Mammary epithelial cell (primary cell): ENCODE measurements at regions of chr11 and their contacts with region 1.

Region 1: GRCh38 chr11:69296890-69297786 is 3.2 kb downstream of the MYEOV start:
- DNase-seq: peak; percentile 99
- H3K4me3 ChIP-seq: no peak overlapping the region
- H3K27ac ChIP-seq: peak overlapping the region; percentile 92
- H3K4me1 ChIP-seq: peaks cover 66% of the 10 kb centered on the region
- H3K27me3 ChIP-seq: no peaks in the 10 kb centered on the region
- CTCF ChIP-seq: no peak

Region 2: GRCh38 chr11:69257838-69258658 is 39.1 kb before region 1 on chr11:
- CTCF ChIA-PET with region 1: no interaction called
- dilution Hi-C with region 1: loop called (anchors 5 kb)
- in situ Hi-C with region 1: no loop called
- intact Hi-C with region 1: no loop called
- DNase-seq: no peak
- H3K4me3 ChIP-seq: no peak overlapping the region
- H3K27ac ChIP-seq: no peak overlapping the region
- H3K4me1 ChIP-seq: peaks cover 3% of the 10 kb centered on the region
- H3K27me3 ChIP-seq: no peaks in the 10 kb centered on the region
- CTCF ChIP-seq: no peak

Region 3: GRCh38 chr11:69352715-69353325 is 55.7 kb after region 1 on chr11:
- CTCF ChIA-PET with region 1: interaction called, 3 read pairs
- dilution Hi-C with region 1: no loop called
- in situ Hi-C with region 1: no loop called
- intact Hi-C with region 1: loop called (anchors 1 kb)
- DNase-seq: peak; percentile 93
- H3K4me3 ChIP-seq: no peak overlapping the region
- H3K27ac ChIP-seq: peak overlapping the region; percentile 26
- H3K4me1 ChIP-seq: peaks cover 35% of the 10 kb centered on the region
- H3K27me3 ChIP-seq: no peaks in the 10 kb centered on the region
- CTCF ChIP-seq: no peak

Region 4: GRCh38 chr11:69436973-69437875 is 140.1 kb after region 1 on chr11:
- CTCF ChIA-PET with region 1: no interaction called
- dilution Hi-C with region 1: loop called (anchors 5 kb)
- in situ Hi-C with region 1: no loop called
- intact Hi-C with region 1: loop called (anchors 1 kb)
- DNase-seq: peak; percentile 82
- H3K4me3 ChIP-seq: no peak overlapping the region
- H3K27ac ChIP-seq: peak overlapping the region; percentile 60
- H3K4me1 ChIP-seq: peaks cover 47% of the 10 kb centered on the region
- H3K27me3 ChIP-seq: no peaks in the 10 kb centered on the region
- CTCF ChIP-seq: peak in 1 of 2 donors; percentile 30

Region 5: GRCh38 chr11:69588270-69588669 is 291.1 kb after region 1 on chr11:
- CTCF ChIA-PET with region 1: no interaction called
- dilution Hi-C with region 1: no loop called
- in situ Hi-C with region 1: no loop called
- intact Hi-C with region 1: loop called (anchors 5 kb)
- DNase-seq: peak; percentile 83
- H3K4me3 ChIP-seq: no peak overlapping the region
- H3K27ac ChIP-seq: peak overlapping the region; percentile 83
- H3K4me1 ChIP-seq: peaks cover 18% of the 10 kb centered on the region
- H3K27me3 ChIP-seq: no peaks in the 10 kb centered on the region
- CTCF ChIP-seq: peak; percentile 51 to 70